SK-N-SH (cell line): ENCODE measurements at regions of chr21 and their contacts with region 1.

Region 1: DNA sequence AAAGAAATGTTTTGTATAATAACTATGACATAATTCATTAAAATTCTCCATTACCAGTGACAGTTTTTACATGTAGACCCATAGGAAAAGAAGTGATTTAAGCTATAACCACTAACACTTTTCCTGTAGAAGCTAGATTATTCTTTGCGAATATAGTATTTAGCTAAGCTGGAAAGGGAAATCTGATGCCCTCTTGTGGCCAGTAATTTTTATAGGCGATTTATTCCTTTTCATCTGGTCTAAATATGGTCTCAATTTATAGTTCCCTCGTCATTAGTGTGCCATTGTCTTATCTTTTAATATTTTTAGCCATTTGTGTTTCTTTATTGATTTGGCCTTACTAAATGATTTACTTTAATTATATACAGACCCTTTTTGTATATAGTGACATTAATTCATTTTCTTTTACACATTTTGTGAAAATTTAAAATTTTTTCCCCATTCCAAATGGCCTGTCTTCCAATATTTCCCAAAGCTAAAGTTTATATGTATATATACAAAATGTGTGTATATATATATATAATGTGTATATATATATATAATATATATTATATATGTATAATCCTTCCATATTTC is 26.7 kb downstream of the BTG3 start:
- DNase-seq: peak; percentile 35
- H3K4me3 ChIP-seq: no peak overlapping the region; a peak in 1 of 4 replicates
- H3K27ac ChIP-seq: no peak overlapping the region
- H3K4me1 ChIP-seq: no peaks in the 10 kb centered on the region
- H3K27me3 ChIP-seq: no peaks in the 10 kb centered on the region
- CTCF ChIP-seq: peak; percentile 73
- EP300 ChIP-seq: no peak
- RAD21 ChIP-seq: peak; percentile 76

Region 2: GRCh38 chr21:17554679-17555465 is 31.1 kb before region 1 on chr21:
- CTCF ChIA-PET with region 1: interaction called, 12 read pairs
- POLR2A ChIA-PET with region 1: no interaction called
- DNase-seq: peak; percentile 61
- H3K4me3 ChIP-seq: no peak overlapping the region
- H3K27ac ChIP-seq: peak overlapping the region in 1 of 2 experiments; percentile 81; a peak in 2 of 4 replicates
- H3K4me1 ChIP-seq: peaks cover 0 to 13% of the 10 kb centered on the region in 2 experiments; a peak in 2 of 4 replicates
- H3K27me3 ChIP-seq: no peaks in the 10 kb centered on the region
- CTCF ChIP-seq: peak; percentile 61
- EP300 ChIP-seq: peak in 1 of 2 experiments; percentile 76; a peak in 2 of 4 replicates
- RAD21 ChIP-seq: peak; percentile 66